ENCODE measurements at regions of chr2 and their contacts with region 1.

Region 1: DNA sequence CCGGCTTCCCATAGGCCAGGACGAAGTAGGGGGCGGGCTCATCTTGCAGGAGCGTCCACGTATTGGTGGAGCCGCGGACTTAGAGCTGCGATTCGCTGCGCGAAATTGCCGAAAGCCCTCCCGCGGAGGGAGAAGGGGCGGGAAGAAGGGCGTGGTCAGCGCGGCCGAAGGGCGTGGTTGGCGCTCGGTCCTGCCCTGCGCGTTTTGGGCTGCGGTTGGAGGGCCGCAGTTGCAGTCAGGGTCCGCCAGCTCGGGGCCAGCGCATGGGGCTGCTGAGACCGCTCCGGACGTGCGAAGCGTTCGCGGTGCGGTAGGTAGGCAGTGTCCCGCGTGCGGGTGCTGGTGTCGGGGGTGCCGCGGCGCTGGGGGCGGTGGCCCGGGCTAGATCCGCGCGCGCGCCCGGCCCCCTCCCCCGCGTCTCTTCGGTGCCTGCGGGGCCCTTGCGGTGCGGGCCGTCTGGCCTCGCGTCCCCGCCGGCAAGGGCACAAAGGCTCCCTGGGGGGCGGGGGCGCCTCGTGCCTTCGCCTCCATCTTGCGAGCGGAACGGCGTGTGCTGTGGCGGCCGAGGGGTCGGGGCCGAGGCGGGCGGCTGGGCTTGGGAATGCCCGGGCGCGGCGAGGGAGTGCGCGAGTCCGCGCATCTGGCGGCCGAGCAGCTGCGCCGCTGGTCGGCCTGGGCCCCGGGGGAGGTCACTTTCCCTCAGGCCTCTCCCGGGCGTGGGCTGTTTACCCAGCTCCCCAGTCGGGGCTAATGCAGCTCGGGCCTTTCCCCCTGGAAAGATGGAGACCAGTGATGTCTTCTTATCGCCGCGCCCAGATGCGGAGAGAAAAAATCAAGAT is at the start of gene CEP68:
- DNase-seq: peak; percentile 98
- H3K4me3 Mint-ChIP-seq: peak within 1 kb of the TSS; percentile 94
- H3K27ac Mint-ChIP-seq: peak within 1 kb of the TSS; percentile 78
- H3K4me1 Mint-ChIP-seq: peaks cover 50% of the 10 kb centered on the region
- H3K27me3 Mint-ChIP-seq: no peaks in the 10 kb centered on the region
- total RNA-seq, gene CEP68: 6.6 to 8.0 TPM

Region 2: DNA sequence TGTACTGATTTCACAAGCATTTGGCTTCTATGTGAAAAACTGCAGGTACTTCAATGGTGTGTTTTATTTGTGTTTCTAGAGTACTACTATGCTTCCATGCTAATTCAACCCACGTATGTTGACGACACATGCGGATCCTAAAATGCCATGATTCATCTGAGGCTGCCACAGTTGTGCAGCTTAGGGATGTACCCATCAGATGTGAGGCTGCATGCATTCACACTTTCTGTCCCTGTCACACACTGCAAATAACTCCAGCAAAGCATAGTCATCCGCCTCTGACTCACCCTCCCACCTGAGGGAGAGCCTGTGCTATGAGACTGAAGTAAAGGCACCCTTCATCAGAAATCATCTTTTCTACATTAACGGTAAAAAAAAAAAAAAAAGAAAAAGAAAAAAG is 380.6 kb before region 1 on chr2:
- CTCF ChIA-PET with region 1: no interaction called
- POLR2A ChIA-PET with region 1: no interaction called
- intact Hi-C with region 1: no loop called
- DNase-seq: peak; percentile 87
- H3K4me3 Mint-ChIP-seq: no peak overlapping the region
- H3K27ac Mint-ChIP-seq: no peak overlapping the region
- H3K4me1 Mint-ChIP-seq: peaks cover 25% of the 10 kb centered on the region
- H3K27me3 Mint-ChIP-seq: no peaks in the 10 kb centered on the region

Region 3: DNA sequence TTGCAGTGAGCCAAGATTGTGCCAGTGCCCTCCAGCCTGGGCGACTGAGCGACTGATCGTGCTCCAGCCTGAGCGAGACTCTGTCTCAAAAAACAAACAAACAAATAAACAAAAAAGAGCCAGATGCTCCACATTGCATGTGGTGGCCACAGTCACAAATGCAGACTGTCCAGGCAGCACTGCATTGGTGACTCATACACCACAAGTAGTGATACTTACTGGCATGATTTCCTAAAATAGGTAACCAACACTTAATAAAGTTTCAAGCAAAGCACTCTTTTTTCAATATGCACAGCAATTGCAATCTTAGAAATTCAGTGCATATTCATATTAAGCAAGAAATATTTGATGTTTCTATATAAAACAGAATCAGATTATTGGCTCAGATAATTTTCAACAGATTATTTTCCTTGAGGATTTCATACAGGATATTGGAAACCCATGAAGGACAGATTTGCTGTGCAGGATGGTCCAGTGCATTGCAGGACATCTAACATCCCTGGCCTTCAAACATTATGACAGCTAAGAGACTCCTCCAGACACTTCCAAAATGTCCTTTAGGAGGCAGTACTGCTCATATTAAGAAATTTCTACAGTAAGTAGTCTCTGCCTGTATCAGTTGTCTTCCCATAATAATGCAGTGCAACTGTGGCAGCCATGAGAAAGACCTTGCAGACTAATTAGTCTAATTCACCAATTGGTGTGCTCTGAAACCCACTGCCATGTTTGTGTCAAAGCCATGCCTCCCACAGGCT is 77.7 kb before region 1 on chr2:
- CTCF ChIA-PET with region 1: no interaction called
- POLR2A ChIA-PET with region 1: no interaction called
- intact Hi-C with region 1: loop called (anchors 1 kb)
- DNase-seq: no peak
- H3K4me3 Mint-ChIP-seq: no peak overlapping the region
- H3K27ac Mint-ChIP-seq: no peak overlapping the region
- H3K4me1 Mint-ChIP-seq: peaks cover 21% of the 10 kb centered on the region
- H3K27me3 Mint-ChIP-seq: no peaks in the 10 kb centered on the region

Region 4: GRCh38 chr2:65040400-65041261 is 15.8 kb before region 1 on chr2:
- CTCF ChIA-PET with region 1: interaction called, 13 read pairs
- POLR2A ChIA-PET with region 1: interaction called, 3 read pairs
- intact Hi-C with region 1: no loop called
- DNase-seq: peak; percentile 85
- H3K4me3 Mint-ChIP-seq: peak overlapping the region; percentile 28
- H3K27ac Mint-ChIP-seq: no peak overlapping the region
- H3K4me1 Mint-ChIP-seq: peaks cover 6% of the 10 kb centered on the region
- H3K27me3 Mint-ChIP-seq: no peaks in the 10 kb centered on the region

Region 5: GRCh38 chr2:65169760-65170136 is 113.3 kb after region 1 on chr2:
- CTCF ChIA-PET with region 1: interaction called, 15 read pairs
- POLR2A ChIA-PET with region 1: no interaction called
- intact Hi-C with region 1: no loop called
- DNase-seq: no peak
- H3K4me3 Mint-ChIP-seq: no peak overlapping the region
- H3K27ac Mint-ChIP-seq: no peak overlapping the region
- H3K4me1 Mint-ChIP-seq: no peaks in the 10 kb centered on the region
- H3K27me3 Mint-ChIP-seq: no peaks in the 10 kb centered on the region

Region 6: DNA sequence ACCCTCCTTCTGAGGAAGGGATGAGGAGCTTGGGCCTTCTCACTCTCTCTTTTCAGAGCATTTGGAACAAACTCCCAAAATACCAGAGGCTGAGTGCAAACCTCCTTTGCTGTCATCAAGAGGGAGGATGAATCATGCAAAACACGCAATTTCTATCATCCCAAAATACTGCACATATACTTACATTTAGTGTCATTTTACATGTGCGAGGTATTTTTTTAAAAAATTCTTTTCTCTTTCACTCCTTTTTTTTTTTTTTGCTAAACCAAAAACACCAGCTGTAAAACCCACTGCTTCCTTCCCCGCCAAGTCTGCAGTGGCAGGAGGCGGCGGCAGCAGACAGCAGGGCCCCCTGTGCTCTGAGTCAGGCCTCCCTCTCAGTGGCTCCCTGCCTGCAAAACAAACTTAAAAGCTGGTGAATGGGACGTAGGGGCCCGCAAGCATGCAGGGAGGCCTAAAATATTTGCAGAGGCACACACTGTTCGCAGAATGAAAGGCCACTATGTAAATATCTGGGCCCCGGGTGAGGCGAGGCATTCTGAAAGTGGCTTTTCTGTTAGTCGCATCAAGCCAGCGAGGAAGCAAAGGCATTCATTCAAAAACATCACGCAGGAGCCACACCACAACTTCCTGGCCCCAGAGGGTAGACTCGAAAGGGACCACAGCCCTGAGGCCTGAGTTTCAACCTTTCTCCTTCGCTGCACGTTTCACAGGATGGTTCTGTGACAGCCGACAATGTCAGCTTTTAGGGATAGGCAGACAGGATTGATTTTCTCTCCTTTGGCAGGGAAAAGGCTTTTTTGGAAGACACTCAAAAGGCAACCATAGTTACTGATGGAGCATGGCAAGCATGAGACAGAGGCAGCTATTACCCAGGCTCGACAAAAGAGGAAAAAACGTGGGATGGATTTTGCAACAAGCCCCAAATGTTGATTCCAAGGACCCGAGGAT is 244.6 kb after region 1 on chr2:
- CTCF ChIA-PET with region 1: no interaction called
- POLR2A ChIA-PET with region 1: no interaction called
- intact Hi-C with region 1: loop called (anchors 1 kb)
- DNase-seq: peak; percentile 87
- H3K4me3 Mint-ChIP-seq: peak overlapping the region; percentile 50
- H3K27ac Mint-ChIP-seq: peak overlapping the region; percentile 77
- H3K4me1 Mint-ChIP-seq: peaks cover 45% of the 10 kb centered on the region
- H3K27me3 Mint-ChIP-seq: peaks cover 15% of the 10 kb centered on the region